WTC11 (cell line): ENCODE measurements at regions of chr3 and their contacts with region 1.

Region 1: GRCh38 chr3:194315088-194315964 is 35.8 kb downstream of the CPN2 start:
- DNase-seq: peak; percentile 93
- ATAC-seq: peak; percentile 85
- H3K4me3 Mint-ChIP-seq: peak overlapping the region; percentile 72
- H3K27ac Mint-ChIP-seq: no peak overlapping the region
- H3K4me1 Mint-ChIP-seq: peaks cover 35% of the 10 kb centered on the region
- H3K27me3 Mint-ChIP-seq: peaks cover 48% of the 10 kb centered on the region
- CTCF ChIP-seq: peak; percentile 93

Region 2: DNA sequence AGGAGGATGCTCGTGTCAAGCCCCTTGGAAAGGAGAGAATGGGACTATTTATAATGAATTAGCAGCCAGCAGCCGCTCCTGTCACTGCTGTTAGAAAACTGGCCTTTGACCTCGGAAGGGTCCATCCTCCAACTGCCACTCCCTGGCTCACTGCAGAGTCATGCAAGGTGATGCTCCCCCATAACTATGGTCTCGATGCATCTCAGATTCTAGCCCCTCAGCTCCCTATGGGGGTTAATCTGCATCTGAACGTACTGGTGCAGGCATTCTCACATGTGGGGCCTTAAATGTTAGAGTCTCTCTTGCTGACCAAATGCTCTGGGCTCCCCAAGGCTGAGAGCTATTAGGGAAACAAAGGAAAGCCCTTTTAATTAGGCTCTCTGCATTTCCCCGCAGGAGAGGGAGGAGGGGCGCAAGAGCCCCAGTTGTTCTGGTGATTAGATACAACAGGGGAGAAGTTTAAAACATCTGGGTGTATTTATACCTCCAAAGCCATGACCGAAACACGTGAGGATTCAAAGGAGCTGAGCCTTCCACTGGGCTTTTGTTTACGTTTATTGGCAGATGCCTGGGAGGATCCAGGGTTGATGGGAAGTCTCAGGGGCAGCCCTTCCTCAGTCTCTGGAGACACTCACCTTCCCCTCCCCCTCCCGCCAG is 539.8 kb before region 1 on chr3:
- CTCF ChIA-PET with region 1: interaction called, 56 read pairs
- POLR2A ChIA-PET with region 1: interaction called, 4 read pairs
- DNase-seq: peak; percentile 46
- ATAC-seq: peak; percentile 73
- H3K4me3 Mint-ChIP-seq: peak overlapping the region; percentile 47
- H3K27ac Mint-ChIP-seq: peak overlapping the region; percentile 84
- H3K4me1 Mint-ChIP-seq: peaks cover 64% of the 10 kb centered on the region
- H3K27me3 Mint-ChIP-seq: peaks cover 50% of the 10 kb centered on the region
- CTCF ChIP-seq: no peak

Region 3: GRCh38 chr3:194058189-194058571 is 257.1 kb before region 1 on chr3:
- CTCF ChIA-PET with region 1: interaction called, 17 read pairs
- POLR2A ChIA-PET with region 1: no interaction called
- DNase-seq: peak; percentile 82
- ATAC-seq: peak; percentile 79
- H3K4me3 Mint-ChIP-seq: peak overlapping the region; percentile 57
- H3K27ac Mint-ChIP-seq: peak overlapping the region; percentile 89
- H3K4me1 Mint-ChIP-seq: peaks cover 57% of the 10 kb centered on the region
- H3K27me3 Mint-ChIP-seq: peaks cover 34% of the 10 kb centered on the region
- CTCF ChIP-seq: no peak

Region 4: DNA sequence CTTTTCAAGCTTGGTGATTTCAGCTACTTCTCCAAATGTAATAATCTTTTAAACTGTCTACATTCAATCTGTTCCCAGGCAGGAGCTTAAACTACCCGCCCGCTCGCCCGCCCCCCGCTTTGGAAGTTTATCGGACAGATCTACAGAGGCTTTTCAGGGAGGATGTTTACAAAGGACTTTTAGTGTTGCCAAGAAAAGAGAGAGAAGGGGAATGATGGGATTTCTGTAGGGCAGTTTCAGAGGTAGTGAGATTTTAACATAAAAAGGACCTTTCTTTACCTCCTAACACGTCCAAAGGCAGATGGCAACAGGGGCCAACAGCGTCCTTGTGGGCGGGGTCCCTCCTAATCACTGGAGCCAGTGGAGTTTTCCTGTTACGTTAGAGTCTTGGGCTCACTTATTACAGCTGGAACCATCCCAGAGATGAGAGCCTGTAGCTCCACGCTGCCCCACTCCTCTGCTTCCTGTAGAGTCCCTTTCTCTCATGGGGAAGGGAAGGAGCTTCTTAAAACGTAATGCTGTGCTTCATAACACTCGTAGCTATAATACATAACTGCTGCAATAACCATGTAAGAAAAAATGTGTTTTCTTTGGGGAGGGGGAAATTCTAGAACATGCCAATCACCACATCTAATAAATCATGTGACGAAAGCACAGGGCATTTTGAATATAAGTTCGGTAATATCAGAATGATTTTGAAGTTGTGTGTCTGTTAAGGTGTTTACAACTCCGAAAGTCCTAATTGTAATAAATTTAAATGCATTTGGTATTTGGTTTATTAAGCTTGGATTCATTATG is 148.4 kb before region 1 on chr3:
- CTCF ChIA-PET with region 1: interaction called, 26 read pairs
- POLR2A ChIA-PET with region 1: no interaction called
- DNase-seq: no peak
- ATAC-seq: peak; percentile 54
- H3K4me3 Mint-ChIP-seq: no peak overlapping the region
- H3K27ac Mint-ChIP-seq: no peak overlapping the region; the same call in 1 of the 2 replicates
- H3K4me1 Mint-ChIP-seq: peaks cover 63% of the 10 kb centered on the region
- H3K27me3 Mint-ChIP-seq: no peaks in the 10 kb centered on the region
- CTCF ChIP-seq: no peak

Region 5: GRCh38 chr3:194224471-194225415 is 90.6 kb before region 1 on chr3:
- CTCF ChIA-PET with region 1: interaction called, 15 read pairs
- POLR2A ChIA-PET with region 1: no interaction called
- DNase-seq: peak; percentile 29
- ATAC-seq: peak; percentile 76
- H3K4me3 Mint-ChIP-seq: no peak overlapping the region
- H3K27ac Mint-ChIP-seq: no peak overlapping the region
- H3K4me1 Mint-ChIP-seq: peaks cover 34% of the 10 kb centered on the region
- H3K27me3 Mint-ChIP-seq: peaks cover 9% of the 10 kb centered on the region
- CTCF ChIP-seq: no peak

Region 6: DNA sequence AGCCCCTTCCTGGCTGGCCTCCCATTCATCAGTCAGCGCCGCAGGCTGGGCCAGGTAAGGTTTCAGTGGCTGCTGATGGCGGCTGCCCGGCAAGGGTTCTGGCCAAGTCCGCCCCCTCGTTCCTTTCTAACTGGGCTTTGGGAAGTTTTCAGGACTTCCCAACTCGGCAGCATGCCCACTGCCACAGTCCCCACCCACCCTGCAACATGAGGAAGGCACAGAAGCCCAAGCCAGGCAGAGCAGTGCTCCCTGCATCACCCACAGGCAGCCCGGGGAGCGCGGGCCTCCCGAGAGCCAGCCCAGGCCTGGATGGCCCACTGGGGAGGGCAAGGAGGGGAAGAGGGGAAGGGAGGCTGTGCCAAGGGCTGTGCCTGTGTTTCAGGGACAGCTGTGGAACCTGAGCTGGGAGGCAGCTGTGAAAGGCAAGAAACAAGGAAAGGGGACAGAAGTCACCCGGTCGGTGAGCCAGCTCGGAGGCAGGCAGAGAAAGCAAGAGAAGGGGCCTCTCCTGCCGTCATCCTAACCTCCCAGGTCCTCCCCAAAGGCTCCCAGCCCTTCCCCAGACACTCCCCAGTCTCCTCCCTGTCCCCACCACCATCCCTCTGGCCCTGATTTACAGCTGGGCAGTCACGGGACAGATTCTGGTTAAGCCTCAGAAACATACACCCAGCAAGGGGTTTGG is 38.1 kb before region 1 on chr3:
- CTCF ChIA-PET with region 1: interaction called, 32 read pairs
- POLR2A ChIA-PET with region 1: no interaction called
- DNase-seq: peak; percentile 12
- ATAC-seq: peak; percentile 16; the same call in 1 of the 2 replicates
- H3K4me3 Mint-ChIP-seq: no peak overlapping the region
- H3K27ac Mint-ChIP-seq: no peak overlapping the region
- H3K4me1 Mint-ChIP-seq: peaks cover 37% of the 10 kb centered on the region
- H3K27me3 Mint-ChIP-seq: no peaks in the 10 kb centered on the region; the same call in 1 of the 2 replicates
- CTCF ChIP-seq: no peak

Region 7: DNA sequence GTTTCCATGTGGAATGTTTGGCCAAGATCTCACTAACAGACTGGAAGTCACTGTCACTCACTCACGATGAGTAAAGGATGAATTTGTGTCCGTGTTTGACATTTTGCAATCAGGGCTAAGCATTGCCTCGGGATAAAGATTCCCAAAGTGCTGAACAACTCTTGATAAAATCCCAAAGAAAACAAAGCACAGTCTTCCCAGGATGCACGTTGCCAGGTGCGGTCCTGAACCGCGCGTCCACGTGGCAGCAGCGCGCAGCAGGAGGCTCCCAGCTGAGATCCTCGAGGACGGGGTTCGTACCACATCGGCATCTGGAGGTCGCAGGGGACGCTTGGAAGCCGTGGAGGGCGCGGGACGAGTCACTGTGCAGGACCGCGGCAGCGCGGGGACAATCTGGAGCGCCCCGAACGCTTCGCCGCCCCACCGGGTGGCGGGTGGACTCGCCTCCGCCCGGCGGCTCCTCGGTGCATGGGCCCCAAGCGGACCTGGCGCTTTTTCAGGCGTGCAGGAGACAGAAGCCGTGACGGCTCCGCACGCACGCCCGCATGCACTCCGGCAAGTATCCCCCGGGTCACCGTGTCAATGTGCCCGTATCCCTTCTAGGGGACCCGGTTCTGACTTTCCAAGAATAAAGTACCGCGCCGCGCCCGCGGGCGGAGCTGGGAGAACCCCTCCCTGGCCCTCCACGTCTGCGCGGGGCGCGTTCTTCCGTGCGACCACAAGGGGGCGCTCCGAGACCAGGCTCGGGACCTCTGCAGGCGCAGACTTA is 18.1 kb after region 1 on chr3:
- CTCF ChIA-PET with region 1: interaction called, 18 read pairs
- POLR2A ChIA-PET with region 1: no interaction called
- DNase-seq: peak; percentile 95
- ATAC-seq: peak; percentile 87
- H3K4me3 Mint-ChIP-seq: peak overlapping the region; percentile 69
- H3K27ac Mint-ChIP-seq: no peak overlapping the region
- H3K4me1 Mint-ChIP-seq: peaks cover 38% of the 10 kb centered on the region
- H3K27me3 Mint-ChIP-seq: peaks cover 34% of the 10 kb centered on the region
- CTCF ChIP-seq: peak; percentile 100

Region 8: GRCh38 chr3:194598771-194599557 is 283.6 kb after region 1 on chr3:
- CTCF ChIA-PET with region 1: no interaction called
- POLR2A ChIA-PET with region 1: no interaction called
- DNase-seq: no peak
- ATAC-seq: no peak
- H3K4me3 Mint-ChIP-seq: no peak overlapping the region
- H3K27ac Mint-ChIP-seq: no peak overlapping the region
- H3K4me1 Mint-ChIP-seq: no peaks in the 10 kb centered on the region
- H3K27me3 Mint-ChIP-seq: no peaks in the 10 kb centered on the region
- CTCF ChIP-seq: no peak